AG04450 (cell line): ENCODE measurements at regions of chr22 and their contacts with region 1.

Region 1: DNA sequence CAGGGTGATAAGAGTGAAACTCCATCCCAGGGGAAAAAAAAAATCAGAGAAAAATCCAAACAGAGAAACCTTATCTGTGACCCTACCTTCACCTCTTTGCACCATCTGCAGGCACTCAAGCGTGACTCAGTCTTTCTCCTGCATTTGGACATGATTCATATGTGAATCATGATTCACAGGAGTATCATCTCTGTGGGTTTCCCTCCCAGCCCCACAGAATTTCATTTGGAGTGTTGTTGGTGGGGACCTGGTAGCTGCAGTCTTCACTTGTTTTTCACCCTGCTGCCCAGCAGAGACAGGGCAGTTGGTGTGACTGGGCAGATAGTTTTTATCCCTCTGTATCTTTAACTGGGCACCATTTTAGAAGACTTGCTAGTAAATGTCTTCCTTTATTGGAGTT is 75.7 kb downstream of the DEPDC5 start:
- DNase-seq: peak; percentile 82
- H3K4me3 ChIP-seq: no peak overlapping the region
- H3K27ac ChIP-seq: peak overlapping the region; percentile 80
- H3K27me3 ChIP-seq: no peaks in the 10 kb centered on the region
- CTCF ChIP-seq: no peak

Region 2: DNA sequence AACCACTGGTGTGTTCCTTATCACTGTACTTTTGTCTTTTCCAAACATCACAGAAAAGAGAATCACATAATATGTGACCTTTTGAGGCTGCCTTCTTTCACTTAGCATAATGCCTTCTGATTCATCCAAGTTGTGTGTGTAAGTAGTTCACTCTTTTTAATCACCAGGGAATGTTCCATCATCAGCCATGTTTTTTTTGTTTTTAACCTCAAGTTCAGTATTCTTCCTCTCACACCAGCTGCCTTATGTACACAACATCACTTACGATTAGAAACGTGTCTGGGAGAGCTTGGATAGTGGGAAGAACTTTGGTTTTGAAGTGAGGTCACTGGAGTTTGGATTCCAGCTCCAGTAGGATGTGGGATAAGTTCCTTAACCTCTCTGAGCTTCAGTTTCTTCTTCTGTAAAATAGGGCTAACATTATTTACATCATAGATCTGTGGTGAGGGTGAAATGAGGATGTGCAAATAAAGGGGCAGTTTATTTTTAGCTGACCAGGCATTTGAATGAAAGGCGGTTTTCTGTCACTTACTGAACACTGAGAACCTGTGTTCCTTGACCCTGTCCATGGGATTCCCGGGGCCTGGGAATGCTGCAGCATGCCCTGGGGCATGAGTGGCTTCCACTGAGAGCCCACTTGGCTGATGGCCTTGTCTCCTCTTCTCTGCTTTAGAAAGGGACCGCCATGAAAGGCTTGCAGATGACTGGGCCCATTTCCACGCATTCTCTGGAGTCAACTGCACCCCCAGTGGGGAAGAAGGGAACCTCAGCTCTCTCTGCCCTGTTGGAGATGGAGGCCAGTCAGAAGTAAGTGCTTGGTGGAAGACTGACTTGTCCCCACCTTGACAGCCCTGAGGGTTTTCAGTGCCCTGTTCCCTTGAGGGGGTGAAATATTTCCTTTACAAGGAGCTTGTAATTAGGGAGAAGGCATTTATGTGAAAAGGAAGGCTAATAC is 16.9 kb after region 1 on chr22:
- CTCF ChIA-PET with region 1: interaction called, 10 read pairs
- POLR2A ChIA-PET with region 1: no interaction called
- DNase-seq: peak; percentile 68
- H3K4me3 ChIP-seq: no peak overlapping the region
- H3K27ac ChIP-seq: peak overlapping the region; percentile 86
- H3K27me3 ChIP-seq: no peaks in the 10 kb centered on the region
- CTCF ChIP-seq: peak; percentile 33

Region 3: DNA sequence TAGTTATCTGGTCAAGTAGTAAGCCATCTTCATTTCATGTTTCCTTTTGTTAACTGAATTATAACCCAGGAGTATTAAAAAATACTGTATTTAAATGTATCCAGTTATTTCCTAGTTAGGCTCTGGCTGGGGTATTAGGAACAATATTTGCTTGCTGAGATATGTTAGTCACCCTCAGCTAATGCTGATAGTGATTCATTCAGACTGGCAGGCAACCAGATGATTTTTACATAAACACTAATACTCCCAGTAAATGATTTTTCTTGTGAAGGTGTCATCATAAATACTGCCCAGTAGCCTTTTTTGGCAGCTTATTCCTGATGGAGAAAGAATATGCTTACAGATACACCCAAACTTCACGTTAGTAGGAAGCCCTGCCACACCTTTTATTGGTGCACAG is 123.0 kb after region 1 on chr22:
- CTCF ChIA-PET with region 1: interaction called, 10 read pairs
- POLR2A ChIA-PET with region 1: no interaction called
- DNase-seq: peak; percentile 49
- H3K4me3 ChIP-seq: no peak overlapping the region
- H3K27ac ChIP-seq: no peak overlapping the region
- H3K27me3 ChIP-seq: no peaks in the 10 kb centered on the region
- CTCF ChIP-seq: no peak